OCI-LY7 (cell line): ENCODE measurements at regions of chr3 and their contacts with region 1.

Region 1: GRCh38 chr3:19293295-19293694 is 145.0 kb downstream of the KCNH8 start:
- DNase-seq: no peak
- H3K4me3 ChIP-seq: no peak overlapping the region
- H3K27ac ChIP-seq: no peak overlapping the region
- H3K4me1 ChIP-seq: no peaks in the 10 kb centered on the region
- CTCF ChIP-seq: no peak

Region 2: DNA sequence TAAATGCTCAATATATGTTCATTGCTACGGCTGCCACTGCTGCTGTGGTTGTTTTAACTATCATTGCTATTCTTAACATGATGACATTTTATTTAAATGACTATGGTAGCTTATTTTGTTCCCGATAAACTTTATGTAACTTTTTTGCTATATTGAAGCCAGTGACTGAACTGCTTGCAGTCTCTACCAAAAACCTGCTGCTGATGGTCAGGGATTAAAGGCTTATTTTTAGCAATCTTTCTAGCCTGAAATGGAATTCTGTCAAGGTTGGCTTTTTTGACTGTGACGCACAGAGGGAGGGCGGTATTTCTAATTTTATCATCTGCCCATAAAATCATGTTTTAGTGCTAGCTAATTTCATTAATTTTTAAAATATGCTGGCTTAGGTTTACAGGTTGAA is 126.9 kb after region 1 on chr3:
- CTCF ChIA-PET with region 1: no interaction called
- POLR2A ChIA-PET with region 1: no interaction called
- intact Hi-C with region 1: no loop called
- DNase-seq: no peak
- H3K4me3 ChIP-seq: no peak overlapping the region
- H3K27ac ChIP-seq: no peak overlapping the region
- H3K4me1 ChIP-seq: no peaks in the 10 kb centered on the region
- CTCF ChIP-seq: no peak

Region 3: DNA sequence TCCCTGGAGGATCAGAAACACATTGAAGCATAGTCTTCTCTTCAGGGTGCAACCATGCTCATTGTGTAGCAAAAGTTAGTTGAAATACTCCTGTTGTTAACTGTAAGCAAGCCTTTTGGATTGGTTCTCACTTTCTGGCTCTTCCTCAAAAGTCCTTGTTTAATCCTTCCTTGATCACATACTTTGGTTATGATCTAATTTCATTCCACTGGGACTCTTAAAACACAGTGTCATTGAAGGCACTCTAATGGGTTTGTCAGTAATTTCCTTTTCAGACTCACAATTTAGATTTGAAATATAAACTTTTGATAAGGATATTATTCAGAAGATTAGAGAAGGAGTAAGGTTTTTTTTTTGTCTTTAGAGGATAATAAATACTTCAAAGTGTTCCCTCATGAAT is 1344.4 kb after region 1 on chr3:
- CTCF ChIA-PET with region 1: no interaction called
- POLR2A ChIA-PET with region 1: no interaction called
- intact Hi-C with region 1: loop called (anchors 10 kb)
- DNase-seq: no peak
- H3K4me3 ChIP-seq: no peak overlapping the region
- H3K27ac ChIP-seq: no peak overlapping the region
- H3K4me1 ChIP-seq: no peaks in the 10 kb centered on the region
- CTCF ChIP-seq: no peak